Right ventricle myocardium inferior (tissue), 1 donor: ENCODE measurements at regions of chr7 and their contacts with region 1.

Region 1: DNA sequence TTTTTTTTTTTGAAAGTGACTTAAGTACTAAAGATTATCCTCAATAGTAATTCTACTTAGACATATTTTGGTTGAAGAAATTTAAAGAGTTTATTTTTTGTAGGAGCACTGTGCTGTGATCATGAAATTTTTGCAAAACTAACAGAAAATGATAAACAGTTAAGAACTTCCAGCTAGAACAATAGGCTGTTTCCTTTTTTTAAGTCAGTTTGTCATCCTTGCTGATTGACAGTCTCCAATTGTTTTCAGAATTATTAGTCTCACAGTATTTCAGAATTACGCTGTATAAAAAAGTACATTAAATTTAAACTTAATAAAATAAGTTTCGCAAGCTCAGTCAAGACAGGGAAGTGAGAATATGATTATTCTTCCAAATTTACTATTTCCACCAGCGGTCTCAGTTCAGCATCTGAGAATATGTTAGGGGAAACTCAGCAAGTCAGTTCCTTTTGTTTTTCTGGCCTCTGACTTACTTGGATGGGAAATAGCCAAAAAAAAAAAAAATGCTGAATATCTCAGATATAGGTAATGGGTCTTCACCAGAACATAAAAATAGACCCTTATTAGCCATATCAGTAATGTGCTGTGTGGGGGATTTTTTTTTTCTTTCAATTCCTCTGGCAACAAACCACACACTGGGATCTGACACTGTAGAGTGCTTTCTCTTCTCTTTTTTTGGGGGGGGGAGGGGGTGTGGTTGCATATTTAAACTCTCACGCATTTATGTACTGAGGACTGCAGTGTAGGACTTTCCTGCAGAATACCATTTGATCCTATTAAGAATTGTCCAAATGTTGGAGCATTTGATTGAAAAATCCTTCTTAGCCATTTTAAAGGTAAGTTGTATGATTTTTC is at the start of gene CD36:
- DNase-seq: no peak
- ATAC-seq: peak; percentile 75
- total RNA-seq, gene CD36: 1,230 TPM

Region 2: DNA sequence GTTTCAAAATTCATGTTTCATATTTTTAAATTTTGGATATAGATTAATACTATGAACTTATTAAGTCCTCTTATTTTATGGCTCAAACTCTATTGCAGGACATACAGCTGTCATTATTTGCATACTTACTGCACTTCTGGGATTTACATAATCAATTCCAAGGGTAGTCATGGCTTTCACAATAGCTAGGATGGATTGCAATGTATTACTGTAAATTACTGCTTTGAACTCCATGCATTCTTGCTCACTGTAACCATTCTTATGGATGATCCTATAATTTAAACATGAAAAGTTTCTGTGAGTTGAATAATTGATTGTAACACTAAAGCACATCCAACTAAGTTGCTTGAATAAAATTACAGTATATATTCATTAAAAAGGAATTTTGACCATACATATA is 149.7 kb before region 1 on chr7:
- intact Hi-C with region 1: loop called (anchors 5 kb)
- DNase-seq: no peak
- ATAC-seq: no peak

Region 3: DNA sequence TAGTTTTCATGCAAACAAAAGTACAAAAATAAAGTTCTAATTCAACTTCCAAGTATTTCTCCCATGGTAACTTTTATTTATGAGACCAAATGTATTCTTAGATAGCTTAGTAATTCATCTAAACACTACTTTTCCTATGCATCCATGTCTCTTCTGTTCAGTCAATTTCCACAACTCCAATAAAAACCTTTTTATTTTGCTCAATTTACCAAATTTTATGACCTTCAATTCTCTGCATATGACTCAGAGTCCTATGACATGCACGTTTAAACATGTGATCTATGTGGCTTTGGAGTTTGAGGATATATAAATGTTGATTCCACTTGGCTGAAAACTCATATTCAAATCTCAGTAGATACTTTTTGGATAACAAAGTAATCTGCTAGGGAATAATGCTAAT is 85.8 kb before region 1 on chr7:
- intact Hi-C with region 1: loop called (anchors 2 kb)
- DNase-seq: no peak
- ATAC-seq: no peak

Region 4: GRCh38 chr7:80596933-80597517 is 41.1 kb before region 1 on chr7:
- intact Hi-C with region 1: loop called (anchors 2 kb)
- DNase-seq: no peak
- ATAC-seq: peak; percentile 53

Region 5: GRCh38 chr7:80711531-80711930 is 73.4 kb after region 1 on chr7:
- intact Hi-C with region 1: no loop called
- DNase-seq: no peak
- ATAC-seq: peak; percentile 62